SK-N-SH (cell line): ENCODE measurements at regions of chr1 and their contacts with region 1.

Region 1: DNA sequence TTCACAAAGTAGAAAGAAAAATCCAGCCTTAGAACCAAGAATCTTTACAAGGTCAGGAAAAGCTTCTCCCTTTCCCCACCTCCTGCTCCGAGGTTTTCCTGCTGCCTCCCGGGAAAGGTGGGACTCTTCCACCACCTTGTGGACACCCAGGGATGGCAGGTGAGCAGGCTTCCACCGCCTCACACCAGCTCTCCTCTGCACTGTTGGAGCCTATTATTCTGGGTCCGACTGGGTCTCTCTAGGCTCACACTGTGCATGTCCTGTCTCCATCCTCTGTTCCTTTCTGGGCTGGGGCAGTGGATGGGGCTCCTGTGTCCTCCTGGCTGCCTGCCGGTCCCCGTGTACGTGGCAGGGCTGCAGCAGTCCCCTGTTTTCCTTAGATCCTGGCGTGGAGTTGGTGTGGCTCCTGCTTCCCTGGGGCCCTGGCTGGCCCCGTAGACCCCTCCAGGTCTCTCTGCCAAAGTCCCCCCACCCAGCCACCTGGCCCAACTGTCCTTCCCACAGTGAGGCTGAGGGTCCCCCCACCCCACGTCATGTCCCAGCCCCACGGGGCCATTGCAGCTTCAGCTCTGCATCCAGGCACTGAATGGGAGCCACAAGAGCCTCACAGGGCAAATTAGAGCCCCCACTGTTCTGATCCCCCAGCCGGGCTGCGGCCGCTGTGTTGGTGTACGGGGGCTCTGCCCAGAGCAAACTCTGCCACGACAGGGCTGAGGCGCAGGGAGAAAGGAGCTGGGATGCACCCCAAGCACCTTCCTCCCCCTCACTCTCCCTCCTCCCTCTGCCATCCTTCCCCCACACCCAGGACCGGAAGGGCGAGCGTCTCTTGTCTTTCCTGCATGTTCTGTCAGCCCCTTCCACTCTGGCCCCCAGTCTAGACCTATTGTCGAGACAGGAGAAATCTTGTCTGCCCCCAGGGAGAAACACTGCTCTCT is 3.3 kb upstream of the SLC45A1 start:
- DNase-seq: peak; percentile 89
- H3K4me3 ChIP-seq: no peak overlapping the region; a peak in 1 of 4 replicates
- H3K27ac ChIP-seq: no peak overlapping the region
- H3K4me1 ChIP-seq: peaks cover 0 to 8% of the 10 kb centered on the region in 2 experiments; a peak in 1 of 4 replicates
- H3K27me3 ChIP-seq: no peaks in the 10 kb centered on the region
- CTCF ChIP-seq: peak; percentile 82
- EP300 ChIP-seq: no peak
- RAD21 ChIP-seq: peak; percentile 98

Region 2: GRCh38 chr1:7783826-7784491 is 530.7 kb before region 1 on chr1 and contains the start of gene PER3:
- CTCF ChIA-PET with region 1: no interaction called
- POLR2A ChIA-PET with region 1: no interaction called
- DNase-seq: peak; percentile 98
- H3K4me3 ChIP-seq: peak within 1 kb of the TSS; percentile 41 to 61
- H3K27ac ChIP-seq: peak within 1 kb of the TSS; percentile 29 to 82; a peak in 3 of 4 replicates
- H3K4me1 ChIP-seq: peaks cover 0 to 6% of the 10 kb centered on the region in 2 experiments; a peak in 1 of 4 replicates
- H3K27me3 ChIP-seq: no peaks in the 10 kb centered on the region
- CTCF ChIP-seq: no peak
- EP300 ChIP-seq: no peak
- RAD21 ChIP-seq: no peak
- polyA plus RNA-seq, gene PER3: 6.0 and 7.3 TPM in 2 replicates

Region 3: GRCh38 chr1:7983086-7983778 is 331.4 kb before region 1 on chr1:
- CTCF ChIA-PET with region 1: interaction called, 64 read pairs
- POLR2A ChIA-PET with region 1: no interaction called
- DNase-seq: no peak
- H3K4me3 ChIP-seq: no peak overlapping the region
- H3K27ac ChIP-seq: no peak overlapping the region
- H3K4me1 ChIP-seq: no peaks in the 10 kb centered on the region; a peak in 1 of 4 replicates
- H3K27me3 ChIP-seq: no peaks in the 10 kb centered on the region
- CTCF ChIP-seq: no peak
- EP300 ChIP-seq: no peak
- RAD21 ChIP-seq: no peak

Region 4: GRCh38 chr1:8026153-8026975 is 288.2 kb before region 1 on chr1 and contains the start of gene ERRFI1:
- CTCF ChIA-PET with region 1: interaction called, 293 read pairs
- POLR2A ChIA-PET with region 1: interaction called, 3 read pairs
- DNase-seq: peak; percentile 98
- H3K4me3 ChIP-seq: peak within 1 kb of the TSS; percentile 89 to 90
- H3K27ac ChIP-seq: peak within 1 kb of the TSS; percentile 68 to 89; a peak in 3 of 4 replicates
- H3K4me1 ChIP-seq: peaks cover 12 to 39% of the 10 kb centered on the region in 2 experiments; a peak in 3 of 4 replicates
- H3K27me3 ChIP-seq: no peaks in the 10 kb centered on the region
- CTCF ChIP-seq: no peak
- EP300 ChIP-seq: 0 out of 4 replicates have a peak, but pooled peaks of 1 of the 2 experiments have one; percentile 21
- RAD21 ChIP-seq: no peak
- polyA plus RNA-seq, gene ERRFI1: 65.6 and 66.9 TPM in 2 replicates

Region 5: GRCh38 chr1:8293118-8293517 is 21.5 kb before region 1 on chr1:
- CTCF ChIA-PET with region 1: interaction called, 20 read pairs
- POLR2A ChIA-PET with region 1: no interaction called
- DNase-seq: no peak
- H3K4me3 ChIP-seq: no peak overlapping the region
- H3K27ac ChIP-seq: no peak overlapping the region
- H3K4me1 ChIP-seq: no peaks in the 10 kb centered on the region
- H3K27me3 ChIP-seq: no peaks in the 10 kb centered on the region
- CTCF ChIP-seq: no peak
- EP300 ChIP-seq: no peak
- RAD21 ChIP-seq: no peak

Region 6: DNA sequence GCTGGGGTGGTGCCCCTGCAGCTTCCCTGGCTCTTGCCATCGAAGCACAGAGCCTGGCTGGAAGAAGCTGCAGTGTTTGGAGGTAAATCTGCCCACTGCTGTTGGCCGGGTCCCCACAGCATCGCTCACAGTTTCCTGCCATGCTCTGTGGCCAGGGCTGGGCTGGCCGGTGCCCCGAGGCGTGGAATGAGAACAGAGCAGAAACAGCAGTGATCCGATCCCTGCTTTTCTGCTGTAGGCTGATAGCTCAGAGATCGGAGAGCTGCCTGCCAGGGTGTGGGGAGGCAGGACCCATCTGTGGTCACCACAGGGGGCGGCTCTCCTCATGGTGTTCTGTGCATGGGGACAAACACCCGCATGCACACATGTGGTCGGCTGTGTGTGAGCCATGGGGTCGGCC is 14.8 kb after region 1 on chr1:
- CTCF ChIA-PET with region 1: interaction called, 25 read pairs
- POLR2A ChIA-PET with region 1: no interaction called
- DNase-seq: peak; percentile 80
- H3K4me3 ChIP-seq: no peak overlapping the region
- H3K27ac ChIP-seq: peak overlapping the region in 1 of 2 experiments; percentile 40; a peak in 1 of 4 replicates
- H3K4me1 ChIP-seq: peaks cover 0 to 11% of the 10 kb centered on the region in 2 experiments; a peak in 1 of 4 replicates
- H3K27me3 ChIP-seq: no peaks in the 10 kb centered on the region
- CTCF ChIP-seq: no peak
- EP300 ChIP-seq: no peak
- RAD21 ChIP-seq: no peak